ENCODE measurements at regions of chr14 and their contacts with region 1.

Region 1: DNA sequence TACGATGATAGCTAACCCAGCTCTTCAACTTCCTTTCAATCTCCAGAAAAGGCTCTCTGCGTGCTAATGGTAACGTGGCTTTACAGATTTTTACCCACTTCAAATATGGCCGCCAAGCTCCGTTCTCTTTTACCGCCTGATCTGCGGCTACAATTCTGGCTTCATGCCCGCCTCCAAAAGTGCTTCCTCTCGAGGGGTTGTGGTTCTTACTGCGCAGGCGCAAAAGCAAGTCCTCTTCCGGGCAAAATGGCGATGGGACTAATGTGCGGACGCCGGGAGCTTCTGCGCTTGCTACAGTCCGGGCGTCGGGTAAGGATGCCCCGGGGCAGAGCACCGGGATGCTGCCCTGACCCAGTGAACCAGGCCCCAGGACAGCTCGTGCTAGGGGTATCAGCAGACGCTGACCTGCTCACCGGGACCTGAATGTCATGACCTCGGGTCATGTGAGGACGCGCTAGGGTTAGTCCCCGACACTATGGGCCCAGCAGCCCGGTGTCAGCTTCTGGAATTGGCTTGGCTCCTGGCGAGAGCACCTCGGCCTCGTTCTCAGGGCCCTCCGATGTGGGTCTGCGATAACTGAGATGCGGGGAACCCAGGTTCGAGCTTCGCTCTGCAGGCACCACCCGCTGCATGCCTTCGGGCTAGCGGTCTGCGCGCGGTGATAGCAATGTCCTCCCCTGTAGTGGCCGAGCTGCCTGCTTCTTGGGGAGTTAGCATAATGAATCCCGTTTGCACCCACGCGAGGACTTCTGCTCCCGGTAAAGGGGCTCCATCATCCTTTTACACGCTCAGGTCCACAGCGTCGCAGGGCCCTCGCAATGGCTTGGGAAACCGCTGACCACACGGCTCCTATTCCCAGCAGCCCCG is at the start of gene OXA1L:
- DNase-seq: peak; percentile 98
- ATAC-seq: peak; percentile 87
- H3K4me3 Mint-ChIP-seq: peak within 1 kb of the TSS; percentile 90
- H3K27ac Mint-ChIP-seq: peak within 1 kb of the TSS; percentile 99
- H3K4me1 Mint-ChIP-seq: peaks cover 32% of the 10 kb centered on the region
- H3K27me3 Mint-ChIP-seq: no peaks in the 10 kb centered on the region
- total RNA-seq, gene OXA1L: 136 to 148 TPM

Region 2: GRCh38 chr14:22713631-22713950 is 53.1 kb before region 1 on chr14:
- CTCF ChIA-PET with region 1: no interaction called
- POLR2A ChIA-PET with region 1: no interaction called
- intact Hi-C with region 1: loop called in 1 of 2 experiments (anchors 1 kb)
- DNase-seq: no peak
- ATAC-seq: no peak
- H3K4me3 Mint-ChIP-seq: peak overlapping the region; percentile 77
- H3K27ac Mint-ChIP-seq: peak overlapping the region; percentile 86
- H3K4me1 Mint-ChIP-seq: peaks cover 8% of the 10 kb centered on the region
- H3K27me3 Mint-ChIP-seq: peaks cover 14% of the 10 kb centered on the region

Region 3: GRCh38 chr14:22737052-22737451 is 29.6 kb before region 1 on chr14:
- CTCF ChIA-PET with region 1: no interaction called
- POLR2A ChIA-PET with region 1: interaction called, 3 read pairs
- intact Hi-C with region 1: loop called in 1 of 2 experiments (anchors 1 kb)
- DNase-seq: peak; percentile 76
- ATAC-seq: peak; percentile 97
- H3K4me3 Mint-ChIP-seq: no peak overlapping the region
- H3K27ac Mint-ChIP-seq: peak overlapping the region; percentile 79
- H3K4me1 Mint-ChIP-seq: peaks cover 12% of the 10 kb centered on the region
- H3K27me3 Mint-ChIP-seq: peaks cover 4% of the 10 kb centered on the region

Region 4: GRCh38 chr14:22829661-22830442 is 63.2 kb after region 1 on chr14 and contains the start of gene MRPL52:
- CTCF ChIA-PET with region 1: interaction called, 9 read pairs
- POLR2A ChIA-PET with region 1: interaction called, 3 read pairs
- intact Hi-C with region 1: loop called (anchors 1 kb)
- DNase-seq: peak; percentile 94
- ATAC-seq: peak; percentile 92
- H3K4me3 Mint-ChIP-seq: peak within 1 kb of the TSS; percentile 82
- H3K27ac Mint-ChIP-seq: peak within 1 kb of the TSS; percentile 98
- H3K4me1 Mint-ChIP-seq: peaks cover 26% of the 10 kb centered on the region
- H3K27me3 Mint-ChIP-seq: no peaks in the 10 kb centered on the region
- total RNA-seq, gene MRPL52: 115 to 136 TPM

Region 5: GRCh38 chr14:23237772-23238594 is 471.3 kb after region 1 on chr14 and contains the start of gene RNF212B:
- CTCF ChIA-PET with region 1: no interaction called
- POLR2A ChIA-PET with region 1: no interaction called
- intact Hi-C with region 1: no loop called
- DNase-seq: peak; percentile 95
- ATAC-seq: peak; percentile 99
- H3K4me3 Mint-ChIP-seq: peak within 1 kb of the TSS; percentile 29
- H3K27ac Mint-ChIP-seq: no peak within 1 kb of the TSS
- H3K4me1 Mint-ChIP-seq: peaks cover 3% of the 10 kb centered on the region
- H3K27me3 Mint-ChIP-seq: peaks cover 20% of the 10 kb centered on the region
- total RNA-seq, gene RNF212B: not detected

Region 6: GRCh38 chr14:24351517-24351916 is 1584.8 kb after region 1 on chr14:
- CTCF ChIA-PET with region 1: no interaction called
- POLR2A ChIA-PET with region 1: no interaction called
- intact Hi-C with region 1: no loop called
- DNase-seq: no peak
- ATAC-seq: no peak
- H3K4me3 Mint-ChIP-seq: no peak overlapping the region
- H3K27ac Mint-ChIP-seq: no peak overlapping the region
- H3K4me1 Mint-ChIP-seq: peaks cover 4% of the 10 kb centered on the region
- H3K27me3 Mint-ChIP-seq: peaks cover 33% of the 10 kb centered on the region